K562 (cell line): ENCODE measurements at regions of chr21 and their contacts with region 1.

Region 1: DNA sequence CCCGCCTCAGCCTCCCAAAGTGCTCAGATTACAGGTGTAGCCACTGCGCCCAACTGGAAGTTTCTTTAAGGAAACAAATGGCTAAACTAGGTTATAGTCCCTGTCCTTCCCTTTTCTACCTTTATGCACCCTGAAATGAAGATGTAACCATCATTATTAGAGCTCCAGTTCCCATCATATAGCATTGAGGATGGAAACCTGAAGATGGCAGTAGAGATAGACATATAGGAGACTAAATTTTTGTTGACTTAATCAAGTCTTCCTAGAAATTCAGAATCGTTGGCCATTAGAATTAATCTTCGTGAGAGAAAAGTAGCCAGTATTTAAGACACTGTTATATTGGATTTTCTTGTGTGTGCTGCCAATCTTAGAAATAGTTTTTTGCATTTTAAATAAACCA is 1016.3 kb upstream of the NCAM2 start:
- DNase-seq: no peak
- ATAC-seq: no peak
- H3K4me3 ChIP-seq: no peak overlapping the region
- H3K27ac ChIP-seq: no peak overlapping the region
- H3K4me1 ChIP-seq: no peaks in the 10 kb centered on the region
- H3K27me3 ChIP-seq: no peaks in the 10 kb centered on the region
- CTCF ChIP-seq: peak in 1 of 3 experiments; percentile 31; a peak in 1 of 6 replicates
- EP300 ChIP-seq: no peak
- POLR2A ChIP-seq: no peak
- RAD21 ChIP-seq: peak; percentile 16 to 56; a peak in 2 of 4 replicates

Region 2: GRCh38 chr21:19700476-19700875 is 281.5 kb before region 1 on chr21:
- CTCF ChIA-PET with region 1: no interaction called
- POLR2A ChIA-PET with region 1: no interaction called
- in situ Hi-C with region 1: no loop called
- intact Hi-C with region 1: no loop called
- DNase-seq: no peak
- ATAC-seq: no peak
- H3K4me3 ChIP-seq: no peak overlapping the region
- H3K27ac ChIP-seq: no peak overlapping the region
- H3K4me1 ChIP-seq: no peaks in the 10 kb centered on the region
- H3K27me3 ChIP-seq: no peaks in the 10 kb centered on the region
- CTCF ChIP-seq: no peak
- EP300 ChIP-seq: no peak
- POLR2A ChIP-seq: no peak
- RAD21 ChIP-seq: no peak

Region 3: DNA sequence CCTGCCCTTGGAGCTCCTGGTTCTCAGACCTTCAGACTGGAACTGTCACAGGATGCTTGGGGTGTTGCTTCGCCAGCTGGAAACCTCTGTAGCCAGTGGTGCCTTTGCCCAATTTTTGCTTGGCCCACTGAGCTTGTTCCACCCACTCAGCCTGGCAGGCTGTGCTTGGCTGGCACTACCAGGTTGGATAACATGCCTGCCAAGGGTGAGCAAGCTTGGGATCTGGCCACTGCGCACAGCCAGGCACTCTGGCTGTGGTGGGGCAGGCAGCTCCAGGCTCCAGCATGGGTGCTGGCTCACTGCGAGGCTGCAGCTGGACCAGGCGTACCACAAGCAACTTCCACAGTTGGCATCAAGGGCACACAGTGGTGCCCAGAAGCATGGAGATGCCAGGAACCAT is 48.5 kb after region 1 on chr21:
- CTCF ChIA-PET with region 1: no interaction called
- POLR2A ChIA-PET with region 1: no interaction called
- in situ Hi-C with region 1: no loop called
- intact Hi-C with region 1: loop called (anchors 10 kb)
- DNase-seq: no peak
- ATAC-seq: no peak
- H3K4me3 ChIP-seq: no peak overlapping the region
- H3K27ac ChIP-seq: no peak overlapping the region
- H3K4me1 ChIP-seq: no peaks in the 10 kb centered on the region
- H3K27me3 ChIP-seq: no peaks in the 10 kb centered on the region
- CTCF ChIP-seq: no peak
- EP300 ChIP-seq: no peak
- POLR2A ChIP-seq: no peak
- RAD21 ChIP-seq: no peak